Heart right ventricle (tissue), 16 donors: ENCODE measurements at regions of chr12 and their contacts with region 1.

Region 1: GRCh38 chr12:105053116-105053572 is 31.1 kb downstream of the ALDH1L2 start:
- DNase-seq: peak; percentile 51 to 55
- ATAC-seq: peak in 5 of 8 donors; percentile 39 to 63 (median 47)
- H3K4me3 ChIP-seq: no peak overlapping the region
- H3K27ac ChIP-seq: no peak overlapping the region
- H3K4me1 ChIP-seq: peaks cover 0 to 4% (median 0%) of the 10 kb centered on the region in 9 donors
- H3K27me3 ChIP-seq: no peaks in the 10 kb centered on the region
- CTCF ChIP-seq: peak; percentile 71 to 96 (median 91)

Region 2: GRCh38 chr12:104201238-104202001 is 851.7 kb before region 1 on chr12:
- intact Hi-C with region 1: loop called in 5 of 10 experiments (anchors 2 to 10 kb)
- DNase-seq: peak in 1 of 2 donors; percentile 47
- ATAC-seq: peak; percentile 59 to 87 (median 76)
- H3K4me3 ChIP-seq: no peak overlapping the region
- H3K27ac ChIP-seq: no peak overlapping the region
- H3K4me1 ChIP-seq: no peaks in the 10 kb centered on the region
- H3K27me3 ChIP-seq: no peaks in the 10 kb centered on the region
- CTCF ChIP-seq: peak; percentile 60 to 89 (median 85)

Region 3: GRCh38 chr12:104376650-104377541 is 676.2 kb before region 1 on chr12:
- intact Hi-C with region 1: loop called (anchors 2 to 10 kb)
- DNase-seq: no peak
- ATAC-seq: no peak
- H3K4me3 ChIP-seq: no peak overlapping the region
- H3K27ac ChIP-seq: no peak overlapping the region
- H3K4me1 ChIP-seq: peaks cover 0 to 9% (median 0%) of the 10 kb centered on the region in 9 donors
- H3K27me3 ChIP-seq: peaks cover 0 to 4% (median 0%) of the 10 kb centered on the region in 7 donors
- CTCF ChIP-seq: no peak

Region 4: DNA sequence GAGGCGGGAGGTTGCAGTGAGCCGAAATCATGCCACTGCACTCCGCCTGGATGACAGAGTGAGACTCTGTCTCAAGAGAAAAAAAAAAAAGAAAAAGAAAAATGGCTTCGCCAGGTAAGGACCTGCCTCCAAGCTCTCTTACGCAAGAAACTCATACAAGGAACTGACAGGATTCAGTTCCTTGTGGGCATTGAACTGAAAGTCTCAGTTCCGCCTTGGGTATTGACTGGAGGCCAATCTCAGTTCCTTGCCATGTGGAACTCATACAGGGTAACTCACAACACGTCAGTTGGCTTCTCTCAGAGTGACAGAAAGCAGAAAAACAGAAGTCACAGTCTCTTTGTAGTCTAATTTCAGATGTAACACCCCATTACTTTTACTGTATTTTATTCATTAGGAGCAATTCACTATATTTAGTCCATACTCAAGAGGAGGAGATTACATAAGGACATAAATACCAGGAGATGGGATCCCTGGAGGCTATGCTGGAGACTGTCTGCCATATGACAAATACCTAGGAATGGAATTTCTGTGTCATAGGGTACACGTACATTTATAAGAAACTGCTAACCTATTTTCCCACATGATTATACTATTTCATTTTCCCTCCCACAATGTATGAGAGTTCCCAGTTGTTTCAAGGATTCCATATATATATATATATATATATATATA is 78.4 kb before region 1 on chr12:
- intact Hi-C with region 1: no loop called
- DNase-seq: no peak
- ATAC-seq: peak in 5 of 8 donors; percentile 33 to 77 (median 61)
- H3K4me3 ChIP-seq: no peak overlapping the region
- H3K27ac ChIP-seq: peak overlapping the region in 1 of 10 donors; percentile 21
- H3K4me1 ChIP-seq: peaks cover 0 to 11% (median 0%) of the 10 kb centered on the region in 9 donors
- H3K27me3 ChIP-seq: no peaks in the 10 kb centered on the region
- CTCF ChIP-seq: no peak